ENCODE measurements at regions of chr6 and their contacts with region 1.

Region 1: DNA sequence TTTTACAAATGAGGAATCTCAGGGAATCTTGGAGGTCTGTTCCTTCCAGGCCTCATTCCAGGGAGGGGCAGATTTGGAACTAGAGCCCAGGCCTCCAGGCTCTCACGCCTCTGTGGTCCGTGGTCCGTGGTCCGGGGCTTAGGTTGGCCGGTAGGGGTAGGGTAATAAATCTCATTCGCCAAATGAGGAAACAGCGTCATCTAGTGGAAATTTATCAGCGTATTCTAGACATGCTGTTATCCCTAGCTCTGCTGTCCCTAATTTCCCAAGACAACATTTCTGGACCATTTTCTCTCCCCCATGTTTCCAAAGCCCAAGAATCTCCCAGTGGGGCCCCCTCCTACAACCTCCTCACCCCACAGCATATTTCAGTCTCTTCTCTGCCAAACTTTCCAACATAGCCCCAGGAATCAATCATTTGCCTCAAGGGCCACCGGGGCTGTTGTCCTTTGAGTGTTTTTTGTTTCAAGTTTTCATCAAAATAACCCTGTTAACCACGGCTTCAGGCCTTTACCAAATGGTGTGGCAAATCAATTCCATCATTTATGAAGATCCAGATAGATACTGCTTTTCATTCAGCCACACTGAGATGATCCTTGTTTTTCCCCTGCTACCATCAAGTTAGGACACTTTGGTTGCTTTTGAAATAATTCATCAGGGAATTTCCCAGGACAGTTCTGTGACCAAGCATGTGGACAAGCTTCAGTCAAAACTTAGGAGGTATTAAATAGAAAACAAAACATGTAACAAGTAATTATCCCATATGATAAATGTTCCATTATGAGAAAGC is 126.8 kb downstream of the ALDH8A1 start:
- DNase-seq: peak; percentile 73 to 86 (median 78)
- ATAC-seq: peak; percentile 100
- H3K4me3 ChIP-seq: no peak overlapping the region
- H3K27ac ChIP-seq: no peak overlapping the region
- H3K4me1 ChIP-seq: no peaks in the 10 kb centered on the region
- H3K27me3 ChIP-seq: peaks cover 11% of the 10 kb centered on the region in 2 experiments
- CTCF ChIP-seq: peak; percentile 92 to 99 (median 98)
- EP300 ChIP-seq: no peak
- POLR2A ChIP-seq: no peak
- RAD21 ChIP-seq: peak; percentile 98

Region 2: GRCh38 chr6:134111062-134111677 is 711.9 kb before region 1 on chr6:
- CTCF ChIA-PET with region 1: interaction called, 19 read pairs
- POLR2A ChIA-PET with region 1: interaction called, 3 read pairs
- in situ Hi-C with region 1: no loop called
- intact Hi-C with region 1: loop called (anchors 2 kb)
- DNase-seq: peak; percentile 79 to 85 (median 83)
- ATAC-seq: peak; percentile 86
- H3K4me3 ChIP-seq: no peak overlapping the region
- H3K27ac ChIP-seq: no peak overlapping the region
- H3K4me1 ChIP-seq: peaks cover 0 to 9% of the 10 kb centered on the region in 2 experiments; a peak in 2 of 5 replicates
- H3K27me3 ChIP-seq: peaks cover 10 to 20% of the 10 kb centered on the region in 2 experiments; a peak in 4 of 5 replicates
- CTCF ChIP-seq: peak; percentile 95 to 100 (median 100)
- EP300 ChIP-seq: no peak
- POLR2A ChIP-seq: no peak
- RAD21 ChIP-seq: peak; percentile 74 to 85

Region 3: GRCh38 chr6:134161036-134161435 is 662.1 kb before region 1 on chr6:
- CTCF ChIA-PET with region 1: interaction called, 16 read pairs
- POLR2A ChIA-PET with region 1: no interaction called
- in situ Hi-C with region 1: no loop called
- intact Hi-C with region 1: loop called (anchors 1 kb)
- DNase-seq: no peak
- ATAC-seq: no peak; the same call in 2 of the 3 replicates
- H3K4me3 ChIP-seq: no peak overlapping the region
- H3K27ac ChIP-seq: no peak overlapping the region
- H3K4me1 ChIP-seq: no peaks in the 10 kb centered on the region
- H3K27me3 ChIP-seq: no peaks in the 10 kb centered on the region
- CTCF ChIP-seq: no peak
- EP300 ChIP-seq: no peak
- POLR2A ChIP-seq: no peak
- RAD21 ChIP-seq: no peak

Region 4: GRCh38 chr6:134431421-134431859 is 391.7 kb before region 1 on chr6:
- CTCF ChIA-PET with region 1: no interaction called
- POLR2A ChIA-PET with region 1: no interaction called
- in situ Hi-C with region 1: no loop called
- intact Hi-C with region 1: no loop called
- DNase-seq: no peak
- ATAC-seq: no peak
- H3K4me3 ChIP-seq: no peak overlapping the region
- H3K27ac ChIP-seq: no peak overlapping the region
- H3K4me1 ChIP-seq: peaks cover 0 to 9% of the 10 kb centered on the region in 2 experiments; a peak in 2 of 5 replicates
- H3K27me3 ChIP-seq: no peaks in the 10 kb centered on the region; a peak in 1 of 5 replicates
- CTCF ChIP-seq: no peak
- EP300 ChIP-seq: no peak
- POLR2A ChIP-seq: no peak
- RAD21 ChIP-seq: no peak

Region 5: DNA sequence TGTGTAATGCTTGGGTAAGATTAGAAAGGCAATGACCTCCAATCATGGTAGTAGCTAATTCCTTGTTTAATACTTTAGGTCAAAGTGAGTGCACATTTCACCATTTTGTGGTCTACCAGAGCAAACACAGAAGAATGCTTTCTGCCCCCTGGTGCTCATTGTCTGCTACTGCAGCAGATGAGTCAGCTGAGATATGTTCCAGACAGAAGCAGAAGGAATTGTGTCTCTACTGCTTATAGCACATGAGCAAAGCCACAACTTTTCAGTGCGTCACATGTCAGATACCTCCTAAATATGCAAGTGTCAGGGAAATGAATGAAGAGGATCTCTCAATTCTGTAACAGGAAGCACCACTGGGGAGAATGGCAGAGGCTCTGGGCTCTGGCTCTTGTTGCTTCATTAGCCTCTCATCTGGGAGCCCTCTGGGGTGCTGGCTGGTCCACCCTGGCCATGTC is 182.1 kb before region 1 on chr6:
- CTCF ChIA-PET with region 1: interaction called, 3 read pairs
- POLR2A ChIA-PET with region 1: no interaction called
- in situ Hi-C with region 1: no loop called
- intact Hi-C with region 1: loop called (anchors 5 kb)
- DNase-seq: peak; percentile 59 to 84 (median 64)
- ATAC-seq: peak; percentile 95
- H3K4me3 ChIP-seq: no peak overlapping the region
- H3K27ac ChIP-seq: no peak overlapping the region
- H3K4me1 ChIP-seq: 0 out of 5 replicates have a peak, but pooled peaks cover 0 to 2% of the 10 kb centered on the region in 2 experiments
- H3K27me3 ChIP-seq: no peaks in the 10 kb centered on the region
- CTCF ChIP-seq: peak; percentile 76 to 89 (median 88)
- EP300 ChIP-seq: no peak
- POLR2A ChIP-seq: no peak
- RAD21 ChIP-seq: peak; percentile 97 to 98

Region 6: GRCh38 chr6:134938896-134939295 is 115.8 kb after region 1 on chr6:
- CTCF ChIA-PET with region 1: interaction called, 6 read pairs
- POLR2A ChIA-PET with region 1: no interaction called
- in situ Hi-C with region 1: no loop called
- intact Hi-C with region 1: loop called (anchors 2 kb)
- DNase-seq: no peak
- ATAC-seq: no peak
- H3K4me3 ChIP-seq: no peak overlapping the region
- H3K27ac ChIP-seq: no peak overlapping the region
- H3K4me1 ChIP-seq: no peaks in the 10 kb centered on the region; a peak in 1 of 5 replicates
- H3K27me3 ChIP-seq: peaks cover 0 to 2% of the 10 kb centered on the region in 2 experiments; a peak in 1 of 5 replicates
- CTCF ChIP-seq: no peak
- EP300 ChIP-seq: no peak
- POLR2A ChIP-seq: no peak
- RAD21 ChIP-seq: no peak

Region 7: DNA sequence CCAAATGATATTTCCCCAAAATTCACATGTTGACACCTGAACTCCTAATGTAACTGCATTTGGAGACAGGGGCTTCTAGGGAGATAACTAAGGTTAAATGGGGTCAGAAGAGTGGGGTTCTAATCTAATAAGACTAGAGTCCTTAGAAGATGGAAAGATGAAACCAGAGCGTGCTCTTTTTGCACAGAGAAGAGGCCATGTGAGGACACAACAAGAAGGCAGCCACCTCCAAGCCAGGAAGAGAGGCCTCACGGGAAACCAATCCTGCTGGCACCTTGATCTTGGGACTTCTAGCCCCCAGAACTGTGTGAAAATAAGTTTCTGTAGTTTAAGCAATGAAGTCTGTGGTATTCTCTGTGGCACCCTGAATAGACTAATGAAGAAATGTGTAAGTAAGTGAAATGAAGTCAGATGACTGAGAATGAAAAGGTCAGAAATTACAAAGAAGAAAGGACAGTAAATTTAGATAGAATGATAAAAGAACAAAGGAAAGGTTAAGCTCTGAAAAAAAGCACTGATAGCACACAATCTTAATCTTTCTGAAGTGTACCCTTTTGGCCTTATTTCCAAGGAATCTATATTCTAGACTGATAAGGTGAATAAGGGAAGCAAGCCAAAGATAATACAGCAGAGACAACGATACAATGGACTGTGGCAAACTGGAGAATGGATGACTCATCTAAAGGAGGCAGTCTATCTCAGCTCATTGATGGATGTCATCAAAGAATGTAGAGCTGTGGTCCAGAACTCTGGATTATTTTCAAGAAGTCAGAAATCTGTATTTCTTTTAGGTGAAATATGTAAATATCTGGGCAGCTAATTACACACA is 468.4 kb after region 1 on chr6:
- CTCF ChIA-PET with region 1: no interaction called
- POLR2A ChIA-PET with region 1: no interaction called
- in situ Hi-C with region 1: no loop called
- intact Hi-C with region 1: no loop called
- DNase-seq: peak in 3 of 4 experiments; percentile 46 to 64 (median 54)
- ATAC-seq: peak; percentile 78
- H3K4me3 ChIP-seq: no peak overlapping the region
- H3K27ac ChIP-seq: peak overlapping the region; percentile 20; the same call in 1 of the 3 replicates
- H3K4me1 ChIP-seq: peaks cover 8 to 20% of the 10 kb centered on the region in 2 experiments
- H3K27me3 ChIP-seq: no peaks in the 10 kb centered on the region
- CTCF ChIP-seq: no peak
- EP300 ChIP-seq: peak; percentile 74
- POLR2A ChIP-seq: no peak
- RAD21 ChIP-seq: no peak; a peak in 1 of 4 replicates